Activated T-helper 1 cell treated with anti-CD3 and anti-CD28 coated beads, Interleukin-12 subunit alpha, Interleukin-12 subunit beta, Interleukin-2, Interleukin-4 antibody, amounts not matched to agents 30 ng/mL and 10 ng/mL and 1 ng/mL, durations not matched to agents 14 hours and 24 hours and 36 hours (primary cell): ENCODE measurements at regions of chr19 and their contacts with region 1.

Region 1: GRCh38 chr19:44500148-44500956 is at the start of gene ZNF180:
- DNase-seq: peak; percentile 92
- H3K4me3 Mint-ChIP-seq: peak within 1 kb of the TSS; percentile 93
- H3K27ac Mint-ChIP-seq: peak within 1 kb of the TSS; percentile 86
- H3K4me1 Mint-ChIP-seq: peaks cover 28% of the 10 kb centered on the region
- H3K27me3 Mint-ChIP-seq: no peaks in the 10 kb centered on the region
- total RNA-seq, gene ZNF180: 8.8 and 10.1 TPM in 2 replicates

Region 2: DNA sequence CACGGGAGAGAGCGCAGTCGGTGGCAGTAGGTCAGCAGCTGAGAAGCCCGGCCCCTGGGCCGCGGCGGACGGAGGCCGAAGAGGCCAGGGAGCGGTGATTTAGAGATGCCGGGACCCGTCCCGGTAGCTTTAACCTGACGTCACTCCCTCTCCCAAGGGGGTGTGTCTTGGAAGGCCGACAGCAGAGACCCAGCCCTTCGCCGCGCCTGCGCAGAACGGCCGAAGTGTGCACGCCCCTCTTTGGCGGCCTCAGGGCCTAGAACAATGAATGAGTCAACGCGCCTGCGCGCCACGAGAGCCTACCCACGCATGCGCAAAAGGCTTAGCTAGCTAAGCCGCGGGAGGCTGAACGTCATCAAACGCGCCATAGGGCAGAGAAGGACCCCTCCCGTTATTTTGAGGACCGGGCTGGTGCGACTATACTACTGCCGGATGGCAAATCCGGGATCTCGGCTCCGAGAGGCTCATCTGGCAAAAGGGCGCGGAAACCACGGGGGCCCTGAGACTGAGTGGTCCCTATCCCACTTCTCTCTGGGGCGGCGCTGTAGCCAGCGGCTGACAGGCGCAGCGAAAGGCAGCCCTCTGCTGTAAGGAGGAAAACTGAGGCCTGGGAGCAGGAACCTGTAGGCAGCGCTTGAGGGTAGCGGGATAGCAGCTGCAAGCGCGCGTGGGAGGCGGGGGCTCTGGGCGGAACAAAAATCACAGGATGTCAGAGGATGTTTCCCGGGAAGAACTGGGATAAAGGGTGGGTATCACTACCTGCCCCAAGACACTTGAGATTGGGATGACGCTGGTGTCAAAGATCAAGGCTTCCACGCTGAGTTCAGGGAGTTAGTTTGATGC is 904.1 kb before region 1 on chr19 and contains the starts of genes IRGQ and ZNF576:
- intact Hi-C with region 1: loop called (anchors 5 kb)
- DNase-seq: peak; percentile 100
- H3K4me3 Mint-ChIP-seq: peak within 1 kb of the TSS; percentile 97
- H3K27ac Mint-ChIP-seq: peak within 1 kb of the TSS; percentile 97
- H3K4me1 Mint-ChIP-seq: peaks cover 39% of the 10 kb centered on the region
- H3K27me3 Mint-ChIP-seq: no peaks in the 10 kb centered on the region
- total RNA-seq, gene IRGQ: 33.5 and 34.9 TPM in 2 replicates
- total RNA-seq, gene ZNF576: 17.3 and 18.6 TPM in 2 replicates

Region 3: DNA sequence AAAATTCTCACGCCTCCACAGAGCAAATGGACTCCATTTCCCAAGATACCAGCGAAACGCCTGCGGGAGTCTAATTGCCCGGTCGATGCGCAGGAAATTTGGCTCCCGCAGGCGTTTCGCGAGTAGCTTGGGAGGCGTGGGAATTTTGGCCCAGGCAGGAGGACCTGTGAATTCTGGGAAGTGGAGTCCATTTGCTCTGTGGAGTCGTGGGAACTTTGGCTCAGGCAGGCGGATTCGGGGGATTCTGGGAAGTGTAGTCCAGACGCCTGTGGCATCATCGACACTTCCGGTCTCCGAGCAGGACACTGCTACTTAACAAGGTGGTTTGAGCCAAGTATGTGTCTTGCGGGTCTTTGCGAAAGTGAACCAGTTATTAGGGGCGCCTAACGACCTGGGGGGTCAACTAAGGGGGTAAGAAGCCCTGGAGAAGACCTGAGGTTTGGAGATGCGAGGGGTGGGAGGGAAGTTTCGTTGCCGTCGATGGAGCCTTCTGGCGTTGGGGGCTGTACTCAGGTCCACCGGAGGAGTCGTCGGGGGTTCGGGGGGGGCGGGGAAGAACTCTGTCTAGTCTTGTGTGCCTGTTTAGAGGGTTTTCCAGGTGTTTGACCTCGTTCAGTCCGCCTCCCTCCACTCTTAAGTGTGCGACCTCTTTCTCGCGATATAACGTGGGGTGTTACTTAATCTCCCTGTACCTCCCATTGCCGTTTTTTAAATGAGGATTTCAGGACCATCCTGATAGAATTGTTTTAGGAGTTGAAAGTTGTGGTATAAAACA is 516.3 kb before region 1 on chr19 and contains the start of gene ZNF155:
- intact Hi-C with region 1: loop called (anchors 1 kb)
- DNase-seq: peak; percentile 56
- H3K4me3 Mint-ChIP-seq: peak within 1 kb of the TSS; percentile 94
- H3K27ac Mint-ChIP-seq: peak within 1 kb of the TSS; percentile 88
- H3K4me1 Mint-ChIP-seq: peaks cover 8% of the 10 kb centered on the region
- H3K27me3 Mint-ChIP-seq: no peaks in the 10 kb centered on the region
- total RNA-seq, gene ZNF155: 5.2 and 6.5 TPM in 2 replicates

Region 4: GRCh38 chr19:44113138-44113783 is 387.1 kb before region 1 on chr19 and contains the start of gene ZNF225:
- intact Hi-C with region 1: loop called (anchors 1 kb)
- DNase-seq: peak; percentile 81
- H3K4me3 Mint-ChIP-seq: peak within 1 kb of the TSS; percentile 100
- H3K27ac Mint-ChIP-seq: peak within 1 kb of the TSS; percentile 88
- H3K4me1 Mint-ChIP-seq: peaks cover 30% of the 10 kb centered on the region
- H3K27me3 Mint-ChIP-seq: no peaks in the 10 kb centered on the region
- total RNA-seq, gene ZNF225: 3.8 and 5.0 TPM in 2 replicates

Region 5: GRCh38 chr19:44212250-44212865 is 288.0 kb before region 1 on chr19 and contains the start of gene ZNF227:
- intact Hi-C with region 1: loop called (anchors 1 kb)
- DNase-seq: peak; percentile 70
- H3K4me3 Mint-ChIP-seq: peak within 1 kb of the TSS; percentile 89
- H3K27ac Mint-ChIP-seq: peak within 1 kb of the TSS; percentile 79
- H3K4me1 Mint-ChIP-seq: peaks cover 27% of the 10 kb centered on the region
- H3K27me3 Mint-ChIP-seq: no peaks in the 10 kb centered on the region
- total RNA-seq, gene ZNF227: 21.7 and 22.6 TPM in 2 replicates

Region 6: DNA sequence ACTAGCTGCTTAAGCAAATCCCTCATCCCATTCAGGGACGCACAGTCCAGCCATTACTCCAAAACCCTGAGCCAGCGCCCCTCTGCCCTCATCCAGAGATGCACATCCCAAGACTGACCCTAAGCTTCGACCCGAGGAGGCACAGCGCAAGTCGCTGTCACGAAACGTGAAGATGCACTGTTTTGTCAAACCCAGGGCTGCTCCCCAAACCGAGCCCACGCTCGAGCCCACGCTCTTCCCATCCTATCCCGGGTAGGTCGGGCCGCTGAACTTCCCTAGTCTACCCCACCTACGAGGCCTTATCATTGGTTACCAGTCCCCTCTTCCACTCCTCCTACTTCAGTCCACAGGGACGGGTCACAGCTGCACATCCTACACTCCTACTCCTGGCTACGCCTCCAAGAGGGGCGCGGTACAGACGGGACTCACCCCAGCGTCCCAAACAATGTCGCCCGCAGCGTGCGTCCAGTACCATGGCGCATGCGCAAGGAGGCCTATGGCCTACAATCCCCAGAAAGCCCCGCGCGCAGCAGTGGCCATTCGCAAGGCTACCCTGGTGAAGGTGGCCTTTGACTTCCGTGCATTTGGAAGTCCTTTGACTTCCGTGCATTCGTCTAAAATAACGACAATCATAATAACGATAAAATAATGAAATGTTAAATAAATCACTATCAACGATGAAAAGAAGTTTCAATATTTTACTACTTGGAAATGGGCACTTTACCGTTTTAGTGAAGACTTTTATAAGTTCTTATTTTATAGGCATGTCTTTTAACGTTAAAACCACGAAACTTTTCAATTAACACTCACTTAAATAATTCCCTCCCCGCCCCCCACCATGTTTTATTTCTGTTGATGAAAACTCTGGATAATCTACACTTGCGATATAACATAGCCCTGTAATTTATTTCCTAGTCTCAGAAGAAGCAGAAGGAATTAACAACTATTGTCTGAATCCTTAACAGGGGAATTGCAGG is 98.9 kb before region 1 on chr19 and contains the start of gene ZNF285:
- intact Hi-C with region 1: loop called (anchors 1 kb)
- DNase-seq: peak; percentile 25
- H3K4me3 Mint-ChIP-seq: peak within 1 kb of the TSS; percentile 77
- H3K27ac Mint-ChIP-seq: peak within 1 kb of the TSS; percentile 31
- H3K4me1 Mint-ChIP-seq: peaks cover 5% of the 10 kb centered on the region
- H3K27me3 Mint-ChIP-seq: peaks cover 2% of the 10 kb centered on the region
- total RNA-seq, gene ZNF285: 0.07 TPM in 1 of 2 replicates, not detected in the other

Region 7: GRCh38 chr19:44525721-44526430 is 25.5 kb after region 1 on chr19:
- intact Hi-C with region 1: no loop called
- DNase-seq: no peak
- H3K4me3 Mint-ChIP-seq: no peak overlapping the region
- H3K27ac Mint-ChIP-seq: no peak overlapping the region
- H3K4me1 Mint-ChIP-seq: no peaks in the 10 kb centered on the region
- H3K27me3 Mint-ChIP-seq: no peaks in the 10 kb centered on the region